ENCODE measurements at regions of chr12 and their contacts with region 1.

Region 1: DNA sequence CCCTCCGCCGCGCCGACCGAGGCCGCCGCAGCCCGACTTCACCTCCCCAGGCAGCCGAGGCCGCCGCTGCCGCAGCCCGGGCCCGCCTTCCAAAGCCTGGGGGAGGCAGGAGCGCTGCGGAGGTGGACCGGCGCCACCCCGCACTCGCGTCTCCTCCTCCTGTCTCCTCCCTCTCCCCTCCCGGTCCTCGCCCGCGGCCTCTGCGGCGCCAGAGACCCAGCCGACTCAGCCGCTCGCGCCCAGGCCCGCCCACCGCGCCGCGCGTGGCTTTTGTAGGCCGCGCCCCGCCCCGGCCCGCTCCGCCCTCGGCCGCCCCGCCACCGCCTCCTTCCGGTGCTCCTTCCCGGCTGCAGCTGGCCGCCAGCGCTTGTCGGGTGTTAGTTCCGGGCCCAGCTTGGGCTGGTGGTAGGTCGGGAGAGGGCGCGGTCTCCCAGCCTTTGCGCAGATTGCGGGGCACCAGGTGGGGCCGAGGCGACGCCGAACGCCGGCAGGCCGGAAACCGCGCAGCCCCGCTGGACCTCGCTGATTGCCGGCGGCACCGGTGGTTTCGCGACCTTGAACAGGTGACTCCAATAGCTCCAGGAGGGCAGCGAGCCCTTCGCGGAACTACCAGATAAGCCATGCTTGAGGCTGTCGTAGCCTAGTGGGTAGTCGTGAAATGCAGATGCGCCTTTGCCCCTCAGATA is at the start of gene CAPRIN2:
- DNase-seq: peak; percentile 96
- H3K4me3 ChIP-seq: peak within 1 kb of the TSS; percentile 84
- H3K27ac ChIP-seq: peak within 1 kb of the TSS; percentile 90
- H3K4me1 ChIP-seq: peaks cover 7% of the 10 kb centered on the region
- H3K27me3 ChIP-seq: no peaks in the 10 kb centered on the region
- CTCF ChIP-seq: peak; percentile 20
- total RNA-seq, gene CAPRIN2: 6.1 to 8.2 TPM

Region 2: DNA sequence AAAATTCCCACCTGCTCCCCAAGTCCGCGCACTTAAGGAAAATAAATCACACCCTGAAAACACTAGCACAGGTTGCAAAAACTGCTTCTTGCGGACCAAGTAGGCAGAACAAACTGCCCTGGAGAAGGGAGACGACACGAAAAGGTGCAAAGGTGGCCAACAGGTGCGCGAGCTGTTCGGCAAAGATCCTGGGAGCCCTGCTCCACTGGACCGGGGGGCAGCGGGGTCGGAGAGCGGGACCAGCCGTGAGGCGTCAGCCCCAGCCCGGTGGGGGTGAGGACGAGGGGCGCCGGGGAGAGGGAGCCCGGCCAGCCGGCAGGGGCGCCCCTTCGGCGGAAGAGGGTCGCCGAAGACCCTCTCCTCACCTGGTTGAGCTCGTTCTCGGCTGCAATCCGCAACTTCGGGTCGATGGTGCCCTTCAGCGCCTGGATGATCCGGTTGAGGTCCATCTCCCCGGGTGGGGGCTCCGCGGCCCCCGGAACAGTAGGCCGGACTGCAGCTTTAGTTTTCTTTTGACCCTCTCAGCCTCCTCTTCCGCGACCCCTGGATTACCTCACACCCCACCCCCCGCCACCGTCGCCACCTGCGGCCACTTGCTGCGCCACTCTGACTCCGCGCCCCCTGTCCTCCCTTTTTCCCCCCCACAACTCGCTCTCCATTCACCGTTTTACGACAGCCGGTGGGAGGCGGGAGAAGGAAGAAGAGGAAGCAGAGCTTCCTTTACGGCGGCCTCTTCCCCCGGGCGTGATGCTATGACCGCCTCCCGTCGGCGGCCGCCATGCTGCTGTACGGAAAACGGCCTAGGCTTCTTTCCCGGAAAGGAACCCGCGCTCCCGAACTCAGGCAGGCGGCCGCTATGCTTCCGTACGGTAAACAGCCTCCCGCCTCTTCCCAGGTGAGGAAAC is 59.4 kb before region 1 on chr12 and contains the start of gene IPO8:
- intact Hi-C with region 1: loop called (anchors 10 kb)
- DNase-seq: peak; percentile 95
- H3K4me3 ChIP-seq: peak within 1 kb of the TSS; percentile 79
- H3K27ac ChIP-seq: peak within 1 kb of the TSS; percentile 63
- H3K4me1 ChIP-seq: no peaks in the 10 kb centered on the region
- H3K27me3 ChIP-seq: no peaks in the 10 kb centered on the region
- CTCF ChIP-seq: peak; percentile 16
- total RNA-seq, gene IPO8: 55.2 to 57.2 TPM